Activated T-helper 1 cell treated with anti-CD3 and anti-CD28 coated beads, Interleukin-12 subunit alpha, Interleukin-12 subunit beta, Interleukin-2, Interleukin-4 antibody, amounts not matched to agents 30 ng/mL and 10 ng/mL and 1 ng/mL, durations not matched to agents 14 hours and 24 hours and 36 hours (primary cell): ENCODE measurements at regions of chr4 and their contacts with region 1.

Region 1: DNA sequence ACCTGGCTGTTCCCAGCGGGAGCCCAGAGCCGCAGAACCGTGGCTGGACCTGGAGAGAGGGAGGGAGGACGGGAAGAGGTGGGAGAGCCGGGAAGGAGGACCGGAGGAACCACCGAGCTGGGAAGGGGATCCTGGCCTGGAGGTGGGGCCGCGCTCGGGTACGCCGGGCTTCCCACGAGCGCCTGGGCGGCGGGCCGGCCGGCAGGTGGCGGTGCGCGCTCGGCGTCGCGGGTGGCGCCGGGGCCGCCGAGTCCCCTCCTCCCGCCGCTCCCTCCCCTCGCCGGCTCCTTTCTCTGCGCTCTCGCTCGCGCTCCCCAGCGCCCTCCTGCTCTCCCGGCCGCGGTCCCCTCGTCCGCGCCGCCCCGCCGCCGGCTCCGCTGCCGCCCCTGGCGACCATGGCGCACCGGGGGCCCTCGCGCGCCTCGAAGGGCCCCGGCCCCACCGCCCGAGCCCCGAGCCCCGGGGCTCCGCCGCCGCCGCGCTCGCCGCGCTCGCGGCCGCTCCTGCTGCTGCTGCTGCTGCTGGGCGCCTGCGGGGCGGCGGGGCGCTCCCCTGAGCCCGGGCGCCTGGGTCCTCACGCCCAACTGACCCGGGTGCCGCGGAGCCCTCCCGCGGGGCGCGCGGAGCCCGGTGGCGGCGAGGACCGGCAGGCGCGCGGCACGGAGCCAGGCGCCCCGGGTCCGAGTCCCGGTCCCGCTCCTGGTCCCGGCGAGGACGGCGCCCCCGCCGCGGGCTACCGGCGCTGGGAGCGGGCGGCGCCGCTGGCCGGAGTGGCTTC is at the start of gene SORCS2:
- DNase-seq: peak; percentile 28
- H3K4me3 Mint-ChIP-seq: no peak within 1 kb of the TSS
- H3K27ac Mint-ChIP-seq: no peak within 1 kb of the TSS
- H3K4me1 Mint-ChIP-seq: no peaks in the 10 kb centered on the region
- H3K27me3 Mint-ChIP-seq: peaks cover 44% of the 10 kb centered on the region
- total RNA-seq, gene SORCS2: not detected in 2 replicates

Region 2: DNA sequence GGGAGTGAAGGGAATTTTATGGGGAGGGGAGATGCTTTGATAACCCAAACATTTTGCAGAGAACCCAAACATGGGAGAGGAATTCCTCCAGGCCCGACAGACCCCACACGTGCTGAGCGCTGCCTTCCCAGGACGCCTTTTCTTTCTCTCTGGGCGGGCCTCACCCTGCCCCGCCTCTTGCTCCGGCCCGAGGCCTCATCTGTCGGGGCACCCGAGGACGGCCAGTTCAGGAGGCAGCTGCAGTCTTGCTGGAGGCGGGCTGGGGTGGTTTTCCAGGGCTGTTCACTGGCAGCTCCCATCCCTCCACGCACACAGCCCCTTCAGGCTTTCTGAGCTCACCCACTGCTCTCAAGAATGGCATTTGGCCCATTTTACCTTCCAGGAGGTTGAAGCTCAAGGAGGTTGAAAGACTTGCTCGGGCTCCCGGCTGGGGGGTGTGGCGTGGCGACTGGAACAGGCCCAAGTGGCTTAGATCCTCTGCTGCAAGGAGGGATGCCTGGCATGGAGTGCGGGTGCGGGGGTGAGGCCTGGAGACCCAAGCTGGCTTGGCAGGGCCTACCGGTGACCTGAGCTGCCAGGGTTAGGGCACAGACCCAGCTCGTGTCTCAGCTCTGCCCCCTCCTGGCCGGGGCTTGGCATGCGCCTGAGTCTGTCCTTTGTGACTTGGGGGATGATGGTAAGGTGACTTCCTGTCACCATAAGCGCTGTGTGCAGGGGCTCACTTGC is 143.1 kb after region 1 on chr4:
- intact Hi-C with region 1: loop called (anchors 10 kb)
- DNase-seq: peak; percentile 30
- H3K4me3 Mint-ChIP-seq: no peak overlapping the region
- H3K27ac Mint-ChIP-seq: no peak overlapping the region
- H3K4me1 Mint-ChIP-seq: no peaks in the 10 kb centered on the region
- H3K27me3 Mint-ChIP-seq: no peaks in the 10 kb centered on the region

Region 3: DNA sequence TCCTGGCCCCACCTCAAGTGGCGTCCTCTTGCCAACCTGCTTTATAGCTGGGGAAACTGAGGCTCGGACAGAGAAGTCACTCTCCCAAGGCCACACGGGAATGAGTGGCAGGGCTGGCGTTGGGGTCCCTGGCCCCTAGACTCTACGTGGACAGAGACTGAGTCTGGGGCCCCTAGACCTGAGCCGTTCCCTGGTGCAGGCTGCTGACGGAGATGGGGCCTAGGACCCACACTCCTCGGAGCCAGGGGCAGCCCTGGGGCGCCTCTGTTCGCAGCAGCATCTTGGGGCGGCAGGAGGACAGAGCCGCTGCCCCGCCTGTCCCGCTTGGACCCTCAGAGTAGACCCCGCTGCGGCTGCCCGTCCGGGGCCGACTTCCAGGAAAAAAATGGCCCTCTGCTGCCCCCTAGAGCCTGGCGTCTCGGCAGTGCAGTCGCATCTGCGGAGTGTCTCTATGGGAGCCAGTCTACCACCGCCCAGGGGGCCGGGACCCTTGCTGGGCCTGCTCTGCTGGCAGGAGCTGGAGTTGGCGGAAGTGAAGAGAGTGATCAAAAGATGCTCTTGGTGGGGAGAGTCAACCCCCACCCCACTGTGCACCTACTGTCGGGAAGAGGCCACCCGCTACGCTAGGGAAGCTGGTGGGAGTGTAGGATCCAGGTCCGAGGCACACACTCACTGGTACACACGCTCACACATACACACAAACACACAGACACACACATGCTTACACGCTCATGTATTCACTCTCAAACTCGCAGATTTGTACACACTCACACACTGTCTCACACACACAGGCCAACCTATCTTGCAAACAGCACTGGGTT is 527.1 kb after region 1 on chr4:
- intact Hi-C with region 1: loop called (anchors 10 kb)
- DNase-seq: peak; percentile 17
- H3K4me3 Mint-ChIP-seq: no peak overlapping the region
- H3K27ac Mint-ChIP-seq: no peak overlapping the region
- H3K4me1 Mint-ChIP-seq: no peaks in the 10 kb centered on the region
- H3K27me3 Mint-ChIP-seq: peaks cover 5% of the 10 kb centered on the region